ENCODE measurements at regions of chr5 and their contacts with region 1.

Region 1: DNA sequence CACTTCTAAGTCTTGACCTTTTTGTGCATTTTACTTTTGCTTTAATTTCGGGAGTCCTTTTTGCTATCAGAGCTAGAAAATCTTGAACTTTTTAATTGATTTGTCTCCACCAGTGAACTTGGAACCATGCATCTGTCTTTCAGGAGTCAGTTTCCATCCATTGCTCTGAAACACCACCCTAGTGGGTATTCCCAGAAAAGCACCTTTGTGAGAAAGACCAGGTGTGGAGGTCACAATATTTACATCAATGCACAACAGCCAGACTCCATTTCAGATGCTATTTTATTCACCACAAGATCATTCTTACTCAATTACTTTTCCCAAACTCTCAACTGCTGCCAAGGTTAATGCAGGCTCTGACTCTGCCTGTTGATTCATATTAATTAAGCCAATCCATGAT is 154.0 kb upstream of the CCNG1 start:
- DNase-seq: no peak
- ATAC-seq: no peak
- H3K4me3 Mint-ChIP-seq: no peak overlapping the region
- H3K27ac Mint-ChIP-seq: no peak overlapping the region
- H3K4me1 Mint-ChIP-seq: no peaks in the 10 kb centered on the region
- H3K27me3 Mint-ChIP-seq: no peaks in the 10 kb centered on the region
- CTCF ChIP-seq: no peak

Region 2: DNA sequence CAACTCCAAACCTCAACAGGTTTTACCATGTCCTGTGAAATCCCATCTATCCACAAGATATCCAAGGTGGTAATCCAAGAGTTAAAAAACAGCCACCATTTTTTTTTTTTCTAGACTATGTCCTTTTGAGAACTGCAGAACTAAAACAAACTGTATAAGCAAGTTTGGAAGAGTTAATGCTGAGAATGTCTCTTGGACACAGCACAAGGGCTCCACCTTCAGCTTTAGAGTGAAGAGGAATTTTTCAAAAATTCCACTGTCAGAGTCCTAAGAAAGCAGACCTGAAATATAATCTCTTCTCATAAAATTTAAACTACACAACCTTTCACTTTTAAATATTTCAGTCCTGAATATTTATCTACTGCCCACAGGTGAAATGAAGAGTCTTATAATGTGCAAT is 13.7 kb before region 1 on chr5:
- CTCF ChIA-PET with region 1: no interaction called
- POLR2A ChIA-PET with region 1: interaction called, 10 read pairs
- intact Hi-C with region 1: no loop called
- DNase-seq: no peak
- ATAC-seq: no peak
- H3K4me3 Mint-ChIP-seq: no peak overlapping the region
- H3K27ac Mint-ChIP-seq: no peak overlapping the region
- H3K4me1 Mint-ChIP-seq: no peaks in the 10 kb centered on the region
- H3K27me3 Mint-ChIP-seq: no peaks in the 10 kb centered on the region
- CTCF ChIP-seq: no peak

Region 3: DNA sequence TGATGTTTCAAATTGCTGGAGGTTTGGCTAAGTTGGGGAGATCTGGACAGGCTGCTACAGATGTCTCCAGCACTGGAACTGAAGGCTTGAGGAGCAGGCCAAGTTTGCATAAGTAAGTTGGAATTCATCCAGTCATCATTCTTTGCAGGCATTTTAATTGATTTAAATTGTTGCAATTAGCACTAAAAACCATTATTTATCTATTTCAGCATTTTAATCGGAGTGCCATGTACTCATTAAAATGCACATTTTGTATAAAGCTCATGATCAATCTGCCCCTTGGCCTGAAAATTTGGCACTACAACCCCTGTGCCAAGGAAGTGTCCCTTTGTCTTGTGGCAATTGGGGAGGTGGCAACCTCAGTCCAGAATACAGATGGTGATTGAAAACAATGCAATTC is 542.3 kb after region 1 on chr5:
- CTCF ChIA-PET with region 1: no interaction called
- POLR2A ChIA-PET with region 1: no interaction called
- intact Hi-C with region 1: no loop called
- DNase-seq: no peak
- ATAC-seq: no peak
- H3K4me3 Mint-ChIP-seq: no peak overlapping the region
- H3K27ac Mint-ChIP-seq: no peak overlapping the region
- H3K4me1 Mint-ChIP-seq: peaks cover 4% of the 10 kb centered on the region
- H3K27me3 Mint-ChIP-seq: no peaks in the 10 kb centered on the region
- CTCF ChIP-seq: no peak

Region 4: GRCh38 chr5:165086465-165086864 is 1803.1 kb after region 1 on chr5:
- CTCF ChIA-PET with region 1: no interaction called
- POLR2A ChIA-PET with region 1: no interaction called
- intact Hi-C with region 1: no loop called
- DNase-seq: no peak
- ATAC-seq: no peak
- H3K4me3 Mint-ChIP-seq: no peak overlapping the region
- H3K27ac Mint-ChIP-seq: no peak overlapping the region
- H3K4me1 Mint-ChIP-seq: no peaks in the 10 kb centered on the region
- H3K27me3 Mint-ChIP-seq: no peaks in the 10 kb centered on the region
- CTCF ChIP-seq: no peak